IMR-90 (cell line): ENCODE measurements at regions of chr1 and their contacts with region 1.

Region 1: DNA sequence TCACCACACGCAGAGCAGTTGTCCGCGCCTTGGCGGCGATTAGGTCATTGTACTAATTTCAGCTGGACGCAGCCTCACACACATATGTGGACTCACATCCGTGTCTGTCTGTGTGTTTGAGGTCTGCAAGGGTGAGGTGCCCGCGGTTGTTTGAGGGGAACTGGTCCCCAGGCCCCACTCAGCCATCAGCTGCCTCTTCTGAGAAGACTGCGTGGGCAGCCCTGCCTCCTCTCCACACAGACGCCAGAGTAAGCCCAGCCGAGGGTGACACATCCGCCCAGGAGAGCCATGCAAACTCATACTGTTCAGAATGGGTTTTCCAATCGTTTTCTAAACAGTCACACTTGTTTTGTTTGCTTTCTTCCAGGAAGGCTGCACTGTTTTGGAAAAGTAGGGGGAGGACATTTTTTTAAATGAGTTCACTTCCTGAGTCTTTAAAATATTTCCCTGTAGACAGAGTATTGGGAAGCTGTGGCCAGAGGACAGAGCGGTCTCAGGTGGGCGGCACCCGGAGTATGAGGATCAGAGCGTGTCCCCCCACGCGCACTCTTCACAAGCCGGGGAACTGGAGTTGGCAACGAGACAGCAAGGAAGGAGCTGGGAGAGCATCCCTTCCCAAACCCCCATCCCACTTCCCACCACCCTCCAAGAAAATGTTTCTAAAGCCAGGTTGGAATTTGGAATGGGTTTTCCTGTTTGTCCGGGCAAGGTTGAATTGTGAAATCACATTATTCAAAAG is 53.3 kb downstream of the TOMM20 start:
- DNase-seq: peak; percentile 97
- ATAC-seq: peak; percentile 85
- H3K4me3 ChIP-seq: no peak overlapping the region
- H3K27ac ChIP-seq: peak overlapping the region; percentile 95
- H3K4me1 ChIP-seq: peaks cover 44% of the 10 kb centered on the region
- H3K27me3 ChIP-seq: no peaks in the 10 kb centered on the region
- CTCF ChIP-seq: no peak
- POLR2A ChIP-seq: peak; percentile 54; the same call in 1 of the 2 replicates
- RAD21 ChIP-seq: no peak

Region 2: DNA sequence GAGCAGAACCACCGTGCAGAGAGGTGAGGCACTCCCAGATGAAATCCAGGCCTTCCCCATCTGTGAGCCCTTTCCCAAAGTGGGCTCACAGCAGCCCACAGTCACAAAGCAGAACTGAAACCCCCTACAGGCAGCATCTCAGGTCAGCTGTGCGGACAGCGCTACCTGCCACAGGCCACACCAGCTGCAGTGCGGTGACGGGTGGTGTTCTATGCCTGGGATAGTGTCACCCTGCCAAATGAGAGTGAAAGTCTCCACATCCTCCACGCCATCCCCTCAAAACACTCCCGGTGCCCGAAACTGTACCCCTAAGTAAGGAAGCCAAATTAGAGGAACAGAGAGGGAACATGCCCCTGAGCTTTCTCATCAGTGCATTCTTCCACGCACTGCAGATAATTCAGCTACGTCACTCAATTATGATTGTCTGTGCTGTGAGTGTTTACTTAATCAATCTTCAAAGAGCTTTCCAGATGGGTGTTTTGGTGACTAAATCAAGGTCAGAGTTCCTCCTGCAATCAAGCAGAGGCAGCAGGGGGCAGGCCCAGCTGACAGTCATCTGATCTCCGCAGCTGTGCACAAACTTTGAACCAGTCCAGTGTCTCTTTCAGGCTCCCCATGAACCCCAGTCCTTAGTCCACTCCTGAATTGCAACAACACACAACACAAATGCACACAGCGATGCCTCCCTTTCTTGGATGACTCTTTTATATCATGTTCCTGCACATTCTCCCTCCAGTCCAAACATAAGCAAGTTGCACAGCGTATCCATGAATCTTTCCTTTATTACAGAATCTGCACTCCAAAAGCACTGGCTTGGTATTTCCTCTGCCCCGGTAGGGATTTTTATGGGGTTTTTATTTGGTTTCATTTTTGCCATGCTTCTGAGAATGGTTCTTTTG is 96.7 kb before region 1 on chr1:
- CTCF ChIA-PET with region 1: no interaction called
- POLR2A ChIA-PET with region 1: no interaction called
- dilution Hi-C with region 1: no loop called
- in situ Hi-C with region 1: loop called (anchors 5 kb)
- intact Hi-C with region 1: no loop called
- DNase-seq: peak; percentile 93
- ATAC-seq: peak; percentile 24
- H3K4me3 ChIP-seq: no peak overlapping the region
- H3K27ac ChIP-seq: peak overlapping the region; percentile 96
- H3K4me1 ChIP-seq: peaks cover 53% of the 10 kb centered on the region
- H3K27me3 ChIP-seq: no peaks in the 10 kb centered on the region
- CTCF ChIP-seq: peak; percentile 19; the same call in 1 of the 2 replicates
- POLR2A ChIP-seq: peak; percentile 54
- RAD21 ChIP-seq: peak; percentile 40

Region 3: GRCh38 chr1:234997201-234997895 is 78.0 kb before region 1 on chr1:
- CTCF ChIA-PET with region 1: no interaction called
- POLR2A ChIA-PET with region 1: no interaction called
- dilution Hi-C with region 1: no loop called
- in situ Hi-C with region 1: no loop called
- intact Hi-C with region 1: no loop called
- DNase-seq: peak; percentile 99
- ATAC-seq: peak; percentile 95
- H3K4me3 ChIP-seq: no peak overlapping the region
- H3K27ac ChIP-seq: peak overlapping the region; percentile 90
- H3K4me1 ChIP-seq: peaks cover 14% of the 10 kb centered on the region
- H3K27me3 ChIP-seq: no peaks in the 10 kb centered on the region
- CTCF ChIP-seq: no peak
- POLR2A ChIP-seq: peak; percentile 48; the same call in 1 of the 2 replicates
- RAD21 ChIP-seq: peak; percentile 31

Region 4: GRCh38 chr1:235011599-235012435 is 63.5 kb before region 1 on chr1:
- CTCF ChIA-PET with region 1: no interaction called
- POLR2A ChIA-PET with region 1: no interaction called
- dilution Hi-C with region 1: no loop called
- in situ Hi-C with region 1: no loop called
- intact Hi-C with region 1: loop called (anchors 5 kb)
- DNase-seq: peak; percentile 100
- ATAC-seq: peak; percentile 98
- H3K4me3 ChIP-seq: no peak overlapping the region
- H3K27ac ChIP-seq: peak overlapping the region; percentile 74
- H3K4me1 ChIP-seq: peaks cover 10% of the 10 kb centered on the region
- H3K27me3 ChIP-seq: no peaks in the 10 kb centered on the region
- CTCF ChIP-seq: no peak
- POLR2A ChIP-seq: peak; percentile 63
- RAD21 ChIP-seq: peak; percentile 42